ENCODE measurements at regions of chr20 and their contacts with region 1.

Region 1: GRCh38 chr20:7137395-7138151 is 370.1 kb downstream of the BMP2 start:
- DNase-seq: no peak
- ATAC-seq: no peak
- H3K4me3 ChIP-seq: no peak overlapping the region
- H3K4me3 Mint-ChIP-seq: no peak overlapping the region
- H3K27ac ChIP-seq: no peak overlapping the region
- H3K27ac Mint-ChIP-seq: no peak overlapping the region
- H3K4me1 ChIP-seq: no peaks in the 10 kb centered on the region
- H3K4me1 Mint-ChIP-seq: no peaks in the 10 kb centered on the region
- H3K27me3 ChIP-seq: no peaks in the 10 kb centered on the region
- H3K27me3 Mint-ChIP-seq: no peaks in the 10 kb centered on the region
- CTCF ChIP-seq: no peak

Region 2: GRCh38 chr20:7078813-7079212 is 58.8 kb before region 1 on chr20:
- CTCF ChIA-PET with region 1: no interaction called
- POLR2A ChIA-PET with region 1: no interaction called
- intact Hi-C with region 1: loop called in 1 of 2 experiments (anchors 10 kb)
- DNase-seq: no peak
- ATAC-seq: no peak
- H3K4me3 ChIP-seq: no peak overlapping the region
- H3K4me3 Mint-ChIP-seq: no peak overlapping the region
- H3K27ac ChIP-seq: no peak overlapping the region
- H3K27ac Mint-ChIP-seq: no peak overlapping the region
- H3K4me1 ChIP-seq: no peaks in the 10 kb centered on the region
- H3K4me1 Mint-ChIP-seq: no peaks in the 10 kb centered on the region
- H3K27me3 ChIP-seq: no peaks in the 10 kb centered on the region
- H3K27me3 Mint-ChIP-seq: no peaks in the 10 kb centered on the region
- CTCF ChIP-seq: no peak